ENCODE measurements at regions of chr5 and their contacts with region 1.

Region 1: GRCh38 chr5:125412561-125413495 is 666.4 kb upstream of the ZNF608 start:
- DNase-seq: peak; percentile 93
- H3K4me3 ChIP-seq: no peak overlapping the region
- H3K27ac ChIP-seq: peak overlapping the region; percentile 99
- H3K4me1 ChIP-seq: peaks cover 54% of the 10 kb centered on the region
- H3K27me3 ChIP-seq: no peaks in the 10 kb centered on the region
- CTCF ChIP-seq: peak; percentile 58 to 66
- POLR2A ChIP-seq: no peak

Region 2: DNA sequence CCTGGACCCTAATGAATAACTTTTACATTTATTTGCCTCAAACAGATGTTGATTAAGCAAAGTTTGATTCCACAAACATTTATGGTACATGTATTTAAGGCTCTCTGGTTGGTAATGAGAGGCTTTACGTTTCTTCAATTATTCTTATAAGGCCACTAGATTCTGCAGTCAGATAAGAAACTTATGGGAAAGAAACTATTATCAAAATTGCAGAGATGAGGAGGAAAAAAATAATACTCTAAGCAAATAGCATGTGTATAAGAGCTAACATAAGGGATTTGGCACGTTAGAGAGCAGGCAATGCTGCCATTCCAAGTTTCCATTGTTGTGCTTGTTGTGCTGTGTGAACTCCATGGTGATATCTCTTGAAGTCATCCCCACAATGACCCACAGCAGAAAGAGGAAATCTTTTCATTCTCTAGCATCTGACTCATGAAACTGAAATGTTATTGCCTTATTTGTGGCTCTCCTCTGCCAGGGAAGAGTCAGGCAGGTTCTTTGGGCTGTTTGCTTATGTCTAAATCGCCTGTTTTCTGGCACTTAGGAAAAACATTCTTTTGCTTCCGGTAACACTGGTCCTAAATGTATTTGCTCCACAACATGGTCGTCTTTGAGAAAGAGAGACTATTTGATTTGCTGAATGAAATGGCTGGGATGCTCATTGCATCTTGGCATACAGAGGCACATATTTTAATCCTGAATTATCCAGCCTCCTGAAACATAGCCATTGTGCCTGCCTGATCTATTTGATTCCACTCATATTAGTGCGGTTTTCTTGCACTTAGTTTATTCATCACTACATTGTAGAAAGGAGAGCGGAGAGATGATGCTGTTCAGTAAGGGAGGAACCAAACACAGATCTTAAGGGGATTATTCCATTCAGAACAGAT is 1712.2 kb before region 1 on chr5:
- CTCF ChIA-PET with region 1: no interaction called
- POLR2A ChIA-PET with region 1: no interaction called
- dilution Hi-C with region 1: no loop called
- intact Hi-C with region 1: loop called (anchors 1 kb)
- DNase-seq: peak; percentile 99
- H3K4me3 ChIP-seq: no peak overlapping the region
- H3K27ac ChIP-seq: peak overlapping the region; percentile 93
- H3K4me1 ChIP-seq: peaks cover 21% of the 10 kb centered on the region
- H3K27me3 ChIP-seq: no peaks in the 10 kb centered on the region
- CTCF ChIP-seq: no peak
- POLR2A ChIP-seq: peak; percentile 27

Region 3: GRCh38 chr5:124599028-124599973 is 813.5 kb before region 1 on chr5:
- CTCF ChIA-PET with region 1: interaction called, 4 read pairs
- POLR2A ChIA-PET with region 1: no interaction called
- dilution Hi-C with region 1: no loop called
- intact Hi-C with region 1: loop called (anchors 1 kb)
- DNase-seq: peak; percentile 98
- H3K4me3 ChIP-seq: peak overlapping the region in 1 of 3 experiments; percentile 41
- H3K27ac ChIP-seq: peak overlapping the region; percentile 99
- H3K4me1 ChIP-seq: peaks cover 63% of the 10 kb centered on the region
- H3K27me3 ChIP-seq: no peaks in the 10 kb centered on the region
- CTCF ChIP-seq: no peak
- POLR2A ChIP-seq: peak; percentile 78

Region 4: GRCh38 chr5:124923131-124923530 is 489.7 kb before region 1 on chr5:
- CTCF ChIA-PET with region 1: no interaction called
- POLR2A ChIA-PET with region 1: no interaction called
- dilution Hi-C with region 1: no loop called
- intact Hi-C with region 1: loop called (anchors 5 kb)
- DNase-seq: peak; percentile 90
- H3K4me3 ChIP-seq: no peak overlapping the region
- H3K27ac ChIP-seq: peak overlapping the region; percentile 8
- H3K4me1 ChIP-seq: no peaks in the 10 kb centered on the region
- H3K27me3 ChIP-seq: no peaks in the 10 kb centered on the region
- CTCF ChIP-seq: no peak
- POLR2A ChIP-seq: no peak

Region 5: DNA sequence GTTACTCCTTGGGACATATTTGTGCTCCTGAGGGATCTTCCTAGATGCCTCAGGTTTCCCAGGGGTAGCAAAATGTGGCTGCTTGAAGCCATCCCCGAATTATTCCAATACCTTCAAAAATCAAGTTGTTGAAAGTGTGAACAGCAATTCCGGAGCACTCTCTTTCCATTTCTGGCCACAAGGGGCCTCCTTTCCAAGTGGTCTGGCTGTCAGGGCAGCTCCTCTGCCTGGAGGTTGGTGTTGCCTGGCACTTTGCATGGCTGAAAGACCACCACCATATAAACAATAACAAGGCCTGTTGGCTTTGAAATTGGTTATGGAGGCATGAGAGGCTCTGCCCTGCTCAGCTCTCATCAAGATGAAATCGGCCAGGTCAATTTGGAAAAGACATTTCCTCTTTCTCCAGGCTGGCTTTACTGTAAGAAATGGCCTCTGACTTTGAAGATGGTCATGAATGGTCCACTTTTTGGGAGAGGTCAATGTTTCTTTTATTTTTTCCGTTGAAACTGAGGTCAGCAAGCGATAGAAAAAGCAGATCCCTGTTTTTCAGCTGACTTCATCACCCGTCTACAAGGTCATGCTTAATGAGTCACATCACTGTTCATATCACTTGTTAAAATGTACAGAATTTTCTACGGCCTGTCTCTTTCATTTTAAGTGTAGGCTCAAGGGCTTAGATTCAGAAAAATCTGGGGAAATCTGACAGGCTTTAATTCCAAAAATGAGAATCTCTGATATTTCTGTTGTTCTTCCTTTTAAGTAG is 185.3 kb before region 1 on chr5:
- CTCF ChIA-PET with region 1: interaction called, 4 read pairs
- POLR2A ChIA-PET with region 1: no interaction called
- dilution Hi-C with region 1: no loop called
- intact Hi-C with region 1: loop called (anchors 1 kb)
- DNase-seq: peak; percentile 33
- H3K4me3 ChIP-seq: no peak overlapping the region
- H3K27ac ChIP-seq: no peak overlapping the region
- H3K4me1 ChIP-seq: no peaks in the 10 kb centered on the region
- H3K27me3 ChIP-seq: no peaks in the 10 kb centered on the region
- CTCF ChIP-seq: peak; percentile 48 to 62
- POLR2A ChIP-seq: no peak

Region 6: GRCh38 chr5:125348221-125348692 is 64.6 kb before region 1 on chr5:
- CTCF ChIA-PET with region 1: no interaction called
- POLR2A ChIA-PET with region 1: no interaction called
- dilution Hi-C with region 1: no loop called
- intact Hi-C with region 1: no loop called
- DNase-seq: no peak
- H3K4me3 ChIP-seq: no peak overlapping the region
- H3K27ac ChIP-seq: no peak overlapping the region
- H3K4me1 ChIP-seq: no peaks in the 10 kb centered on the region
- H3K27me3 ChIP-seq: no peaks in the 10 kb centered on the region
- CTCF ChIP-seq: no peak
- POLR2A ChIP-seq: no peak

Region 7: GRCh38 chr5:125463466-125464092 is 50.8 kb after region 1 on chr5:
- CTCF ChIA-PET with region 1: no interaction called
- POLR2A ChIA-PET with region 1: no interaction called
- dilution Hi-C with region 1: no loop called
- intact Hi-C with region 1: no loop called
- DNase-seq: peak; percentile 61
- H3K4me3 ChIP-seq: no peak overlapping the region
- H3K27ac ChIP-seq: no peak overlapping the region
- H3K4me1 ChIP-seq: no peaks in the 10 kb centered on the region
- H3K27me3 ChIP-seq: no peaks in the 10 kb centered on the region
- CTCF ChIP-seq: no peak
- POLR2A ChIP-seq: no peak

Region 8: DNA sequence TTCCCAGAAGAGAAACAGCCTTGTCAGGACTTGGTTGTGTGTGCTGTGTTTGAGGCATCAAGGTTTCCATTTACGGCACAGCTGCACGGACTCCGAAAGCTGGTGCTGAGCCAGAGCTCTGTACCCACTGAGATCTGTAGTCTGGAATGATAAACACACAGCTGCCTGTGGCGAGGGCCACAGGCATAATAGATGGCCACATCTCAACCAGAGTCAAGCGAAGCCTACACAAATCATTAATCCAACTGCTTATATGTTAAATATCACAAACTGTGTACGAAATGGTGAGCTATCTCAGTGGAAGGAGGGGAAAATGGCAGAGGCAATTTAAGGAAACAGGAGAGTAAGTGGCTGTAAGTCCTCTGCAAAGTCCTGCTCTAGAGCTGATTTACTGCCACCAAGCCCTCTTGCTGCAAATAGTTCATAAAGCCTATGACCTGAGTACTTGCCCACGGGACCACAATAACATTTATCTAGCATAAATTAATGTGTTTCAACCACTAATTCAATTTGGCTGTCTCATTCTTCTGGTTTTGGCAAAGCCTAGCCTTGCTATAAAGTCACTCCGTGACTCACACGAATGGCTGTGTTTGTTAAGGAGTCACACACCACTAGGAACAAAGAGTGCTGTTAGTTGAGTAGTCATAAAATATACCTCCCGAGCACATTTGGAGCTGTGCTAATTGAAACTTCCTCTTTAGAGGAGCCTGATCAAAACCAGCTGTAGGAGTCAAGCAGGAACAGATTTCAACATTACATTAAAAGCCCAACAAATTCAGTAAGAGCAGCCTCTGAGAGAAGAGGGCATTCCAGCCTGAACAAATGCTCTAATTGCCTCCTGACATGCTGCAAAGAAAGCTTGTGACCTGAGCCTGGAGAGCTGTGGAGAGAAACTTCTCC is 72.2 kb after region 1 on chr5:
- CTCF ChIA-PET with region 1: interaction called, 21 read pairs
- POLR2A ChIA-PET with region 1: no interaction called
- dilution Hi-C with region 1: no loop called
- intact Hi-C with region 1: loop called (anchors 1 kb)
- DNase-seq: peak; percentile 96
- H3K4me3 ChIP-seq: peak overlapping the region in 1 of 3 experiments; percentile 28
- H3K27ac ChIP-seq: peak overlapping the region; percentile 99
- H3K4me1 ChIP-seq: peaks cover 36% of the 10 kb centered on the region
- H3K27me3 ChIP-seq: no peaks in the 10 kb centered on the region
- CTCF ChIP-seq: no peak
- POLR2A ChIP-seq: peak; percentile 72

Region 9: DNA sequence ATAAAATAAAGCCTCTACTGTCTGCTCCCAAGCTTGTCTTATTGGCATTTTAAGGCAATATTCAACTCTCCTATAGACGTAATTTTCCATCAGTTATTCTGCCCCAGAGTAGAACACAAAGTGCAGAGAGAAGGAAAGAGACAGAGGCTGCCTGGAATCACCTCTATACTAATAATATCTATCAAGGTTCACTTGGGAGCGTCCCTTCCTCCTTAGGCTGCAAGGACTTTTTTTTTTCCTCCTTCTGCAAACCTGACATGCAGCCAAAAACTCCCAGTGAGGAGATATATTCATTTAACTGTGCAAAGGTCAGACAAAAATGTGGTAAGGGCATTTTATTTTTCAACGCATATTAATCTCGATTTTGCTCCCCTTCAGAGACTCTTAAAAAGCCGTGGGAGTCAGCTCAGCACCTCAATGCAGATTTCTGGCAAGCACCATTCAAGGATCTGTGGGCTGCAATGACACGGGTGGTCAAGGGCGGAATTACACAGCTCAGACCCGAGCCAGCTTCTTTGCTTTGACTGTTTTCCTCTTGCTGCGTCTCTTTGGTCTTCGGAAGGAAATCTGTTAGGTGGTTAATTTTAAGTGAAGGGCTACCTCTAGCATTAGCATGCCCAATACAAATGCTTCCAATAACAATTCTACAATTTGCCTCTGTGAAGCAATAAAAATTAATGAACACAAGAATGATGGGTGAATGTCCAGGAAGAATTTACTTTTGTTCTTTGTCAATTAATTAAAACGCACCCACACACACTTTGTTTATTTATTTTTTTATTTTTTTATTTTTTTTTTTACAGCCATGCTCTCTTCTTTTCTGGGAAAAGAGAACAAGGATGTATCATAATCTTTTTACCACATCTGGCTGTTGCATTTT is 422.7 kb after region 1 on chr5:
- CTCF ChIA-PET with region 1: interaction called, 11 read pairs
- POLR2A ChIA-PET with region 1: no interaction called
- dilution Hi-C with region 1: no loop called
- intact Hi-C with region 1: loop called (anchors 2 kb)
- DNase-seq: peak; percentile 68
- H3K4me3 ChIP-seq: no peak overlapping the region
- H3K27ac ChIP-seq: no peak overlapping the region
- H3K4me1 ChIP-seq: no peaks in the 10 kb centered on the region
- H3K27me3 ChIP-seq: no peaks in the 10 kb centered on the region
- CTCF ChIP-seq: peak; percentile 60 to 73
- POLR2A ChIP-seq: no peak